ENCODE measurements at regions of chr4 and their contacts with region 1.

Region 1: DNA sequence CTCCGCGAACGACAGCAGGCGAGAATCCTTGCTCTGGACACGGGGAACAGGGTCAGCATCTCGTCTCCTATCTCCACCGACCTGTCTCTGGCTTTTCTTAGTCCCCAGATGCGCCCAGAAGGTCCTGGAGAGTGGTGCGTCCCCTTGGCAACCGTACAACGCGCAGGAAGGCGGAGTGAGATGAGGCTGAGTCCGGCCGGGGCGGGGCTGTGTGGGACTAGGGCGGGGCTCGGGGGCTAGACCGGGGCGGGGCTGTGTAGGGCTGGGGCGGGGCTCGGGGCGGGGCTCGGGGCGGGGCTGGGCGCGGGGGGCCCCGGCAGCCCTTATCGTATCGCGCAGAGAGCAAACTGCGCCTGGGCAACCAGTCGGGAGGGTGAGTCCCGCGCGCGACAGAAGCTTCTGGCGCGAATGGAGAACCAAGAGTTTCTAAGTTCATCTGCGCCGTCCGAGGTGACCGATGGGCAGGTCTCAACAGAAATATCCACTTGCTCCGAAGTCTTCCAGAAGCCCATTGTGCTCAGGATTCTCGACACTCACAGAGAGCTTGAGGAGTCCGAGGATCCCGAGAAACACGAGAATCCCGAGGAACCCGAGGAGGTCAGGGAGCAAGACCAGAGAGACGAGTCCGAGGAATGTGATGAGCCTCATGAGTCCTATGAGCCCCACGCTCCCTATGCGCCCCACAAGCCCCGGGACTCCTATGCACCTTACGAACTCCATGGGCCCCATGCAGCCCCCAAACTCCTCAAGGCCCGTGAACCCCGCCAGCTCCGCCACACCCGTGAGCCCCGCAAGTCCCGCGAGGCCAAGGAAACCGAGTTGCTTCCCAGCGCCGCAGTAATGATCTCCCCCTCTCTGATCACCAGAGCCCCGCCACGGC is 24.9 kb downstream of the ARL9 start:
- DNase-seq: peak; percentile 51 to 86 (median 81)
- ATAC-seq: peak; percentile 96
- H3K4me3 ChIP-seq: peak overlapping the region; percentile 59 to 87
- H3K4me3 Mint-ChIP-seq: no peak overlapping the region
- H3K27ac ChIP-seq: no peak overlapping the region
- H3K27ac Mint-ChIP-seq: no peak overlapping the region
- H3K4me1 ChIP-seq: peaks cover 6% of the 10 kb centered on the region
- H3K4me1 Mint-ChIP-seq: no peaks in the 10 kb centered on the region
- H3K27me3 ChIP-seq: peaks cover 3 to 5% of the 10 kb centered on the region in 2 experiments
- H3K27me3 Mint-ChIP-seq: peaks cover 9% of the 10 kb centered on the region
- CTCF ChIP-seq: no peak

Region 2: DNA sequence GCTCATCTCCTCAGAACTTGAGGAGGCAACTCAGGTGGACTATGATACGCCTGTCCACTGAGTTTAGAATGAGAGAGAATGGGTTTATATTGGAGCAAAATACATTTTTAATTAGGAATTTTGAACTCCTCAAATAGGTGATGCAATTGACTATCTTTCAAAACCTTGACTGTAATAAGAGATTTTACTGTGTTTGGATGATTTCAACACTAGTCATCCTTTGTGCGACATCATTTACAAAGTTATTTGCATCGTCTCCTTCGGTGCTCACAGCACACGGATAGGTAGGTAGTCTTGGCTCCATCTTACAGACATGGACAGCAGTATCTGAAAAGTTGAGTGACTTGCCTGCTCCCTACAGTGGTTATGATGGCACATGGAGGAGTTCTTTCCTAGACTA is 210.2 kb before region 1 on chr4:
- CTCF ChIA-PET with region 1: no interaction called
- POLR2A ChIA-PET with region 1: no interaction called
- intact Hi-C with region 1: no loop called
- DNase-seq: no peak
- ATAC-seq: no peak
- H3K4me3 ChIP-seq: no peak overlapping the region
- H3K4me3 Mint-ChIP-seq: no peak overlapping the region
- H3K27ac ChIP-seq: no peak overlapping the region
- H3K27ac Mint-ChIP-seq: no peak overlapping the region
- H3K4me1 ChIP-seq: no peaks in the 10 kb centered on the region
- H3K4me1 Mint-ChIP-seq: no peaks in the 10 kb centered on the region
- H3K27me3 ChIP-seq: no peaks in the 10 kb centered on the region
- H3K27me3 Mint-ChIP-seq: peaks cover 2% of the 10 kb centered on the region
- CTCF ChIP-seq: no peak

Region 3: DNA sequence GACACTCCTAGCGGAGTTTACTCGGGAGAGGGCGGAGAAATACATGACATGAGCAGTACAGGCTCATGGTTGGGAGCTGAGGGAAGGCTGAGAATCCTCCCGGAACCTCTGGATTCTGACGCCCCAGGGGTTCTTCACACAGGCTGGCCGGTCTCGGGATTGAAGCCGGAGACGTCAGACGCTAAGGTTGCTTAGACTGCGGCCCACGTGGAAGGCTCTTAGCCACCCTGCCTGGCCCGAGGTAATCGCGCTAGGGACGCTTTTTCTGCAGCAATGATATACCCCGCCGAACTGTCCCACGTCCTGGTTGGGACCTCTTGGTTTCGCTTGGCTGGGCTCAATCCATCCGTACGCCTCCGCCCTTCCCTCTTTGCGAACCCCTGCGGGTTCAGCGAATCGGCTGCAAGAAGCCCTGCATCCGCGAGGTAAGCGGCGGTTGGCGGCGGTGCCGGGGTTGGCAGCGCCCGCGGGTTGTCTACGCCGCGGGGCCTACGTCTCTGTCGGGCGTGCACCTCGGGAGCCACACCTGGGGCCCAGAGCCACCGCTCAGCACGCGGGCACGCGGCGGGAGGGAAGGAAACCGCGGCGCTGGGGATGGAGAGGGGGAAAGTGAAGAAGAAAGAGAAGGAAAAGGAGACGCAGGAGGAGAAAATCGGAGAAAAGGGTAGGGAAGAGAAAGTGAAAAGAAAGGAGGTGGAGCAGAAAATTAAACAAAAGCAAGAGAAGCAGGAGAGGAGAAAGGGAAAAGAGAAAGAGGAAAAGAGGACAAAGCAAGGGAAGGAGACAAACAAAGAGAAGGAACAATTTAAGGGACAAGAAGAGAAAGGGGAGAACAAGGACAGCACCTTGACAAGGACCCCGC is 25.0 kb before region 1 on chr4 and contains the start of gene ARL9:
- CTCF ChIA-PET with region 1: no interaction called
- POLR2A ChIA-PET with region 1: no interaction called
- intact Hi-C with region 1: loop called in 1 of 2 experiments (anchors 2 kb)
- DNase-seq: peak; percentile 40 to 83 (median 74)
- ATAC-seq: peak; percentile 97
- H3K4me3 ChIP-seq: peak within 1 kb of the TSS; percentile 50 to 70
- H3K4me3 Mint-ChIP-seq: peak within 1 kb of the TSS; percentile 89
- H3K27ac ChIP-seq: peak within 1 kb of the TSS in 1 of 2 experiments; percentile 26
- H3K27ac Mint-ChIP-seq: peak within 1 kb of the TSS; percentile 82
- H3K4me1 ChIP-seq: peaks cover 15% of the 10 kb centered on the region
- H3K4me1 Mint-ChIP-seq: peaks cover 17% of the 10 kb centered on the region
- H3K27me3 ChIP-seq: no peaks in the 10 kb centered on the region
- H3K27me3 Mint-ChIP-seq: peaks cover 2% of the 10 kb centered on the region
- CTCF ChIP-seq: no peak
- total RNA-seq, gene ARL9: 0.19 TPM in 1 of 2 experiments, not detected in the other

Measured in CD8-positive, alpha-beta T cell (primary cell).